ENCODE measurements at regions of chr3 and their contacts with region 1.

Region 1: GRCh38 chr3:172750368-172751174 is at the start of gene ECT2:
- DNase-seq: peak; percentile 100
- ATAC-seq: peak; percentile 91
- H3K4me3 ChIP-seq: peak within 1 kb of the TSS; percentile 94
- H3K27ac ChIP-seq: peak within 1 kb of the TSS; percentile 92
- H3K4me1 ChIP-seq: peaks cover 54% of the 10 kb centered on the region
- H3K27me3 ChIP-seq: no peaks in the 10 kb centered on the region
- CTCF ChIP-seq: peak; percentile 82
- total RNA-seq, gene ECT2: 66.9 and 77.4 TPM in 2 replicates

Region 2: DNA sequence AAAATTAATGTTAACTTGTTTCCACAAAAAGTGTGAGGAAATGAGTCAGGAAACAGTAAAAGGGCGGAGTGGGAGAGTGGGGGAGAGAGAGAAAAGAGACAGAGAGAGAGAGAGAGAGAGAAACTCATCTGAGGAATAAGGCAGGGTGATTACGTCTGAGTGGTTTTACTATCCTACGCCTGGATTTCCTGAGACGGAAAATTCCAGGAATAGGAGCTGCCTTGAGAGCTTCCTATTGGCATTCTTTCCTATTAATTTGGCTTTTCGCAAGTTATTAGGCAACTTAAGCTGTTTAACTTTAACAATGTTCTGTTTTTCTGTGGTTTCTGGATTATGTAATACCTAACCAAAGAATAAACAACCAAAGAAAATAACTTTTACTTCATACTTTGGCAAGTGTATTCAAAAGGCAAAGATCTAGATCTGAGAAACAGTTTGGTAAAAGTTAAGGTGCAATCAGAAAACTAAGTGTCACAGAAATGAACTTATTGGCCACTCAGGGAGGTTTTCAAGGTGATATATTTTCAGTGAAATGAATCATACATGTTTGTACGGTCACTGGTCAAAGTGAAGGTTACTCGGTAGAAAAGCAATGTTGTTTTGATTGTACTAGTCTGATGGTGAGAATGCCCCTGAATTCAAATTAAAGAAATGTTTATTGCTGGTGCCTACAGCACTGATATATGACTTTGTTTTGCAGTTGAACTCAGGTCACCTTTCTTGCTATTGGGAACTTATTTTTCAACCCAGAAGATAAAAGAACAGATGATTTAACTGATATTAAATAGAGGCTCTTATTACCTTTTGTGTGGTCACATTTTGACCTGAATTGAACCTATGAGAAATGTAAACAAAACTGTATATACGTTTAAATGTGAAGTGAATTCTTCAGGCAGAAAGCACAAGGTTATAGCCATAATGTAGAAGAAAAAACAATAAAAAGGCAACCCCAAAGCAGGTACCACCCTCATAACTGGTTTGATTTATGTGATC is 187.4 kb before region 1 on chr3:
- CTCF ChIA-PET with region 1: no interaction called
- POLR2A ChIA-PET with region 1: no interaction called
- intact Hi-C with region 1: loop called (anchors 2 kb)
- DNase-seq: peak; percentile 62
- ATAC-seq: peak; percentile 59
- H3K4me3 ChIP-seq: peak overlapping the region; percentile 40
- H3K27ac ChIP-seq: peak overlapping the region; percentile 91
- H3K4me1 ChIP-seq: peaks cover 44% of the 10 kb centered on the region
- H3K27me3 ChIP-seq: no peaks in the 10 kb centered on the region
- CTCF ChIP-seq: no peak

Region 3: DNA sequence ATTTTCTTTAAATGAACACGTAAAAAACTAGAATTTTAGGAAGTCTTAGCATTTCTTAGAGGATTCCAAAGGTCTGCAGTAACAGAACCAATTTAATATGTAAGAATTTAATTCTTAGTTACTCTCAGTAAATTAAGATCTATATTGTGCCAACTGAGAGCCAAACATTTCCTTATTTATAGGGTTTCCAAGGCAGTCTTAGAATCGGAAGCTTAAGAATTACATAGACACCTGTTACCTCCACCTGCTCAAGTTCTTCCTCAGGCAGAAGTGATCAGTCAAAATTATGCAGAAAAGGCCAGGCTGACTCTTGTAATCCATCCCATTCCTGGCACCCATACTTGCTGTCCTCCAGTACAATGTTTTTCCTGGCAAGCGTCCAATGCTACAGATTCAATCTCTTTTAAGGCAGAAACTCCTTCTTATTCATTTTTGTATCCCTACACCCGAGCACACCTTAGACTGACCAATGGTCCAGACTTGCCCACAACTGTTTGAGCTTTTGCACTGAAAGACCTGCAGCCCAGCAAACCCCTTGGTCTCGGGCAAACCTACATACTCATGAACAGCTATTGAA is 104.0 kb before region 1 on chr3:
- CTCF ChIA-PET with region 1: interaction called, 3 read pairs
- POLR2A ChIA-PET with region 1: interaction called, 13 read pairs
- intact Hi-C with region 1: no loop called
- DNase-seq: peak; percentile 41
- ATAC-seq: no peak
- H3K4me3 ChIP-seq: no peak overlapping the region
- H3K27ac ChIP-seq: no peak overlapping the region
- H3K4me1 ChIP-seq: peaks cover 22% of the 10 kb centered on the region
- H3K27me3 ChIP-seq: no peaks in the 10 kb centered on the region
- CTCF ChIP-seq: no peak

Region 4: DNA sequence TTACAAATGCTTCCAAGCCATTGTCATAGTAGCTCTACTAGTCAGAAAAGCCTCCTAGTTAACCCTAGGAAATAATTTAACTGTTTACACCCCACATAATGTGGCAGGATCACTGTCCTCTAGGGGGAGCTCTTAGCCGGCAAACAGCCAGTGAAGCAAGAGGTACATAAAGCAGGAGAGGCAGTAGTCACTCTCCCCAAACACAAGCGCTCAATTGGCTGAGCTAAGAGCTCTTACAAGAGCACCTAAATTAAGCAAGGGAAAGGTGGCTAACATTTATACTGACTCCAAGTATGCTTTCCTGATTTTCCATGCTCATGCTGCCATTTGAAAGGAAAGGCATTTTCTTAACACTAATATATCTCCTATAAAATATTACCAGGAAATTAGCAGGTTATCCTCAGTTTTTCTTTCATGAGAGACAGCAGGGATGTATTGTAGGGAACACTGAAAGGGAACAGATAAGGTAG is 77.3 kb before region 1 on chr3:
- CTCF ChIA-PET with region 1: interaction called, 59 read pairs
- POLR2A ChIA-PET with region 1: interaction called, 20 read pairs
- intact Hi-C with region 1: loop called (anchors 1 kb)
- DNase-seq: peak; percentile 93
- ATAC-seq: peak; percentile 84
- H3K4me3 ChIP-seq: no peak overlapping the region
- H3K27ac ChIP-seq: peak overlapping the region; percentile 8
- H3K4me1 ChIP-seq: peaks cover 35% of the 10 kb centered on the region
- H3K27me3 ChIP-seq: no peaks in the 10 kb centered on the region
- CTCF ChIP-seq: peak; percentile 93

Region 5: DNA sequence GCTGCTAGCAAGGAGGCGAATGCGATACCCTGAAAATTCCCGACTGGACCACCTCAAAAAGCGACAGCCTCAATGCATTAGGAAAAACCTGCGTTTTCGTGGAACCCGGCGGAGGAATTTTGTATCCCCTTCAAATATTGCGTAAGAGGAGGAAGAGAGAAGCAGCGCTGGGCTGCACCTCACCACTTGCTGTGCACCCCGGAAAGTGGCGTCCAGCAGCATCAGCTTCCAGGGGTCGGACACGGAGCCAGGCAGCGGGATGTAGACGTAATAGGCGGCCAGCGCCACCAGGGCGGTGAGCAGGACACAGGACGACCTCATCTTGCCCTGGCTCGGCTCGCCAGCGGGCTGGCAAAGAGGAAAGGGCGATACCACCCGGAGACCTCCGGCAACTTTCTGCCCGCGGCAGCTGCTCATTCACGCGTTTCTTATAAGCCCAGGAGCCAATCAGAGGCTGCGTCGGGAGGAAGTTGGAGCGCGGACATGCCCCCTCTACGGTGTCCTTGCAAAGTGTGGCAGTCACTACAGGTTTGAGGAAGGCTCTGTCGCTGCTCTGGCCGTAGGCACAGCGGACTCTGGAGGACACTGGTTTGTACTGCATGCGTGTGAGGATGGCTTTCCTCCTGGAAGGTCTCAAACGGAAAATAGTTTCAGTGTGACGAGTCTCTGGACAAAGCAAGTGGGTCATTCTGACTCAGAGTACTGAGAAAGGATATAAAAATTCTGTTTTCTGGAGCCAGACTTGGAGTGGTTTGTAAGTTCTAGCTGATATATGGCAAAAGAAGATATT is 39.7 kb before region 1 on chr3 and contains the start of gene NCEH1:
- CTCF ChIA-PET with region 1: interaction called, 38 read pairs
- POLR2A ChIA-PET with region 1: interaction called, 71 read pairs
- intact Hi-C with region 1: loop called (anchors 1 kb)
- DNase-seq: peak; percentile 99
- ATAC-seq: peak; percentile 90
- H3K4me3 ChIP-seq: peak within 1 kb of the TSS; percentile 93
- H3K27ac ChIP-seq: peak within 1 kb of the TSS; percentile 91
- H3K4me1 ChIP-seq: peaks cover 33% of the 10 kb centered on the region
- H3K27me3 ChIP-seq: no peaks in the 10 kb centered on the region
- CTCF ChIP-seq: peak; percentile 88
- total RNA-seq, gene NCEH1: 28.2 and 33.9 TPM in 2 replicates

Measured in PC-3 (cell line).